Kidney (tissue), 22 donors: ENCODE measurements at regions of chr4 and their contacts with region 1.

Region 1: DNA sequence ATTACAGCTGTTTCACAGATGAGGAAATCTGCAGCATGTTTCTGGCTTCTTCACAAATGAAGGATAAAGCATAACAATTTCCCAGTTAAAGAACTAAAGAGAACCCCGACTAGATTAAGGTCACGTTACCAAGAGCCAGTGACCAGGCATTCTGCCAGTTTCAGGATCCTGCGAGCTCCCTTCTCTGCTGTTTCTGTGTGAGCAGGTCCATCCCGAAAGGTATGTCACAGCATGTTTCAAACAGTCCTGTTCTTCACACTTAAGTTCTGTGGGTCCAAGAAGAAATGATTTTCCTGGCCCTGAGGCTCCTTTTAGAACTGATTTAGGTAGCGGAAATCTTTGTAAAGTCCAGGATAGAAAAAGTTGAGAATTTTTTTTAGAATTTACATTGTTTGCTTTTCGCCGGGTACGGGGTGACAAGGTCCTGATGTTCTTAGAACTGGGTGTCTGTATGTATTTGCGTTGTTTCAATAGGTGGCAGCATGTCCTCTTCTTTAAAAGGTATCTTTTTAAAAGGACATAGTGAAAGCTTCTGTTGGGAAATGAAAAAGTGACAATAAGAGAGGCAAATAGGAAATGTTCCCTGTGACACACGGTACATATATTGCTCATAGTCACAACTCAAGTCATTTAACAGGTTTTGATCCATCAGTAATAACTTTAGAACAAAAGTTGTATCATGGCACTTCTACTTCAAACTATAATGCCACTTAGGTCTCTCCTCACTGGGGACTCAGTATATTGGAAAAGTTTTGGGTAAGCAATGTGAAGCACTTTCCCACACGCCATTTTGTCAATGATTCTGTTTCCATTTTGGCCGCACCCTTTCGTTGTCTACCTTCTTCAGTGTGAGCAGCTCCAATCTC is 18.4 kb downstream of the IL21 start:
- DNase-seq: peak in 2 of 5 donors; percentile 31 to 50
- H3K4me3 ChIP-seq: no peak overlapping the region
- H3K27ac ChIP-seq: no peak overlapping the region
- H3K4me1 ChIP-seq: no peaks in the 10 kb centered on the region
- H3K27me3 ChIP-seq: no peaks in the 10 kb centered on the region
- CTCF ChIP-seq: peak; percentile 30

Region 2: DNA sequence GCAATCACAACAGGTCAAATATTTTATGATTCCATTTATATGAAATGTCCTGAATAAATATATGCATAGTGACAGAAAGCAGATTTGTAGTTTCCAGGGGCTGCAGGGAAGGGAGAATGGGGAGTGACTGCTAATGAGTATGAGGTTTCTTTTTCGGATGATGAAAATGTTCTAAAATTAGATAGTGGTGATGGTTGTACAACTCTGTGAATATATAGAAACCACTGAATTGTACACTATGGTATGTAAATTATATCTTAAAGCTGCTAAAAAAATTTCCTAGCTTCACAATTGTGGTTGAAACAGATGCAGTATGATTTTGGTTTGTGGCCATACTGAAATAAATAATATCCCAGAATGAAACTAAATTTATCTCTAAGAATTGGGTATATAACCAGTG is 133.1 kb before region 1 on chr4:
- intact Hi-C with region 1: no loop called
- DNase-seq: no peak
- H3K4me3 ChIP-seq: no peak overlapping the region
- H3K27ac ChIP-seq: no peak overlapping the region
- H3K4me1 ChIP-seq: no peaks in the 10 kb centered on the region
- H3K27me3 ChIP-seq: no peaks in the 10 kb centered on the region
- CTCF ChIP-seq: no peak

Region 3: GRCh38 chr4:122716825-122717448 is 114.4 kb after region 1 on chr4:
- intact Hi-C with region 1: loop called (anchors 10 kb)
- DNase-seq: peak in 2 of 5 donors; percentile 25 to 53
- H3K4me3 ChIP-seq: no peak overlapping the region
- H3K27ac ChIP-seq: no peak overlapping the region
- H3K4me1 ChIP-seq: no peaks in the 10 kb centered on the region
- H3K27me3 ChIP-seq: no peaks in the 10 kb centered on the region
- CTCF ChIP-seq: peak; percentile 64